Gastrocnemius medialis (tissue), 4 donors: ENCODE measurements at regions of chr12 and their contacts with region 1.

Region 1: DNA sequence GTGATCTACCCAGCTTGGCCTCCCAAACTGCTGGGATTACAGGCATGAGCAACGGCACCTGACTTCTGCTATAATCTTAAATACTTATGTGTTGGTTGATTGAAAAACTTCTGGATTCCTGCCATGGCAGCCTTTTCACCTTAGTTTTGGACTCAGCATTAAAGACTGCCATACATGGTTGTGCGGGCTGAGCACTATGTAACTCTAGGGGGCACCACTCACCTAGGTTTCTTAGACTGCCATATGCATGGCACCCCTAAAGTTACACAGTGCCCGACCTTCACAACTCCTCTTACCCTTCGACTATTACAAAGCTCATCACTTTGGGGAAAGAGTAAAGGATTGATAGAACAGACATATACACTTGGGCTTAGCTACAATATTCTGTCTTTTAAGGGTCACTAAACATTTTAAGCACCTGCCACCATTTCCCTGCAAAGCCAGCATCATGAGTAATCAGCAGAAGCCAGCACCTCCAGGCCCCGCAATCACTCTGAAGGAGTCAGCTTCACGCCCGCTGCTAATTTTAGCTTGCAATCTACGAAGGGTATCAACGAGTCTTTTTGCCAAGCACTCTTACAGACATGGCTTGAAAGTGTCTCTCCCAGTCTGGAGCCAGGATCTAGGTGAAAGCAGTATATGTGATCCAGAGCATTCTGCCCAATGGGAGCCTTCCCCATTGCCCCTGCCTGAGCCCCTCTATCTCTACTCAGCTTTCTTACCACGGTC is 59.8 kb downstream of the SUDS3 start:
- DNase-seq: peak in 1 of 2 donors; percentile 17
- ATAC-seq: peak; percentile 38 to 76
- H3K4me3 ChIP-seq: no peak overlapping the region
- H3K27ac ChIP-seq: no peak overlapping the region
- H3K4me1 ChIP-seq: no peaks in the 10 kb centered on the region
- H3K27me3 ChIP-seq: no peaks in the 10 kb centered on the region
- CTCF ChIP-seq: peak; percentile 17 to 53 (median 42)
- POLR2A ChIP-seq: no peak

Region 2: GRCh38 chr12:118456741-118457140 is 20.6 kb after region 1 on chr12:
- in situ Hi-C with region 1: no loop called
- intact Hi-C with region 1: no loop called
- DNase-seq: no peak
- ATAC-seq: no peak
- H3K4me3 ChIP-seq: no peak overlapping the region
- H3K27ac ChIP-seq: no peak overlapping the region
- H3K4me1 ChIP-seq: no peaks in the 10 kb centered on the region
- H3K27me3 ChIP-seq: no peaks in the 10 kb centered on the region
- CTCF ChIP-seq: no peak
- POLR2A ChIP-seq: no peak

Region 3: GRCh38 chr12:118611295-118611694 is 175.1 kb after region 1 on chr12:
- in situ Hi-C with region 1: loop called in 3 of 4 experiments (anchors 25 kb)
- intact Hi-C with region 1: loop called (anchors 1 kb)
- DNase-seq: no peak
- ATAC-seq: no peak
- H3K4me3 ChIP-seq: no peak overlapping the region
- H3K27ac ChIP-seq: no peak overlapping the region
- H3K4me1 ChIP-seq: no peaks in the 10 kb centered on the region
- H3K27me3 ChIP-seq: no peaks in the 10 kb centered on the region
- CTCF ChIP-seq: no peak
- POLR2A ChIP-seq: no peak

Region 4: DNA sequence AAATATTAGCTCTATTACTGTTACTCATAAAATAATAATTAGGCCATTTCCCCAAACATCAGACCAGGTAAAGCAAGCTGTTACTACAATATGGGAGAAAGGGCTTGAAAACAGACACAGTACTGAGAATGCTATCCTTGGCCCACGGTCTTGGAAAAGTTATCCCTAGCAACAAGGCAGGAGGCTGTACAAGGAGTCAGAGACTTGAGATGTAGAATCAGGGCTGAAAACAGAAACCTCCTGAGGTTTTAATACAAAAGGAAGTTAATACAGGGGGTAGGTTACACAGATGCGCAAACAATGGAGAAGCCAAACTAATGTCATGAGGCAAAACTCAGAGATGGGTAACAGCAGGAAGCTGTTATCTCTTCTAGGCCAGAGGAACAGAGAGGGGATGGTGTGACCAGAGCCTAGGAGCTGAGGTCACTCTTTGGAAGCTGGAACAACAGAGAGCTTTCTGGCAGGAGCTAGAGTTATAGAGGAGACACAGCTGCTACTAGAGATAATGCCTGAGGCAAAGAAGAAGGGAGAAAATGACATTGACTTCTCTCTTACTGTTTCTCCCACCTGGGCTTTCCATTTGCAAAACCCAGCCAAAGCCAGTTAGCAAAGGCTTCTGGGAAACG is 189.0 kb after region 1 on chr12:
- in situ Hi-C with region 1: loop called in 3 of 4 experiments (anchors 25 kb)
- intact Hi-C with region 1: loop called (anchors 2 kb)
- DNase-seq: no peak
- ATAC-seq: no peak
- H3K4me3 ChIP-seq: no peak overlapping the region
- H3K27ac ChIP-seq: no peak overlapping the region
- H3K4me1 ChIP-seq: no peaks in the 10 kb centered on the region
- H3K27me3 ChIP-seq: no peaks in the 10 kb centered on the region
- CTCF ChIP-seq: no peak
- POLR2A ChIP-seq: no peak

Region 5: GRCh38 chr12:119036878-119037825 is 601.0 kb after region 1 on chr12:
- in situ Hi-C with region 1: loop called in 1 of 4 experiments (anchors 25 kb)
- intact Hi-C with region 1: no loop called
- DNase-seq: no peak
- ATAC-seq: no peak
- H3K4me3 ChIP-seq: no peak overlapping the region
- H3K27ac ChIP-seq: no peak overlapping the region
- H3K4me1 ChIP-seq: no peaks in the 10 kb centered on the region
- H3K27me3 ChIP-seq: peaks cover 0 to 7% (median 0%) of the 10 kb centered on the region in 3 donors
- CTCF ChIP-seq: peak; percentile 7 to 56 (median 39)
- POLR2A ChIP-seq: no peak

Region 6: GRCh38 chr12:119154419-119154818 is 718.3 kb after region 1 on chr12:
- in situ Hi-C with region 1: no loop called
- intact Hi-C with region 1: no loop called
- DNase-seq: peak in 1 of 2 donors; percentile 38
- ATAC-seq: no peak
- H3K4me3 ChIP-seq: no peak overlapping the region
- H3K27ac ChIP-seq: peak overlapping the region; percentile 93 to 99 (median 95)
- H3K4me1 ChIP-seq: peaks cover 25 to 36% of the 10 kb centered on the region in 2 donors
- H3K27me3 ChIP-seq: no peaks in the 10 kb centered on the region
- CTCF ChIP-seq: no peak
- POLR2A ChIP-seq: no peak